BJ (cell line): ENCODE measurements at regions of chr5 and their contacts with region 1.

Region 1: DNA sequence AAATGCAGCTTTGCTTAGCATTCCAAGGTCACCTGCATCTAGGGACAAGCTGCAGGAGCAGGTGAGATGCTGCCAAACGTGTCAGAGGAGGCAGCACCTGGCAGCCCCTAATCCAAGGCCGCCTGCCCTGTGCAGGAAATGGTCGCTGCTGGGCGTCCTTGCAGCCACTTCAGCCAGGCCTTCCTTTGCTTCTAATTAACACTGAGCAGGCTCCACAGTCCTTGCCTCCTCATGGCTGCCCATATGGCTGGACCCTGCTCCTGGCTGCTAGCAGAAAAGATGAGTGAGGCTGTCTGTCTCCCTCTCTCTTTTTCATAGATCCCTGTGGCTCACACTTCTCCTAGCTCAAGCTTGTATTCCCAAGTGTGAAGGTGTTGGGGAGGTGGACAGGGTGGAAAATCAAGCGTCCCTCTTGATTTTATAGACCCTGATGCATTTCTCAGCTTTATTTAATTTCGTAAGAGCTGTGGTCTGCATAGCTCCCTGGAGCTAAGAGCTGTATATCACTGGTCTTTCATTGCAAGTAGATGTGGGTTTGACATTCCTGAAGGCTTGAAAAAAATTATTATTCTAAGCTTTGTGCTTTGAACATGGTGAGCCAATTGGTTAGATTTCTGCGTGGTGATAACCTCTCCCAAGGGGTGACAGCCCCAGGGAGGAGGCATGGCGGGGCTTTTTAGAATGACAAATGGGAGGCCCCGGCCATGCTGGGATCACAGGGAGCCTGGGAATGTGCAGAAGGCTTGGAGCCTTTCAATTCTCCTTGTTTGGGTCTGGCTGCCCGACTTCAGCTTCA is 193.8 kb downstream of the SLIT3 start:
- DNase-seq: no peak
- H3K4me3 ChIP-seq: no peak overlapping the region
- H3K27me3 ChIP-seq: no peaks in the 10 kb centered on the region; the same call in 1 of the 2 replicates
- CTCF ChIP-seq: no peak

Region 2: DNA sequence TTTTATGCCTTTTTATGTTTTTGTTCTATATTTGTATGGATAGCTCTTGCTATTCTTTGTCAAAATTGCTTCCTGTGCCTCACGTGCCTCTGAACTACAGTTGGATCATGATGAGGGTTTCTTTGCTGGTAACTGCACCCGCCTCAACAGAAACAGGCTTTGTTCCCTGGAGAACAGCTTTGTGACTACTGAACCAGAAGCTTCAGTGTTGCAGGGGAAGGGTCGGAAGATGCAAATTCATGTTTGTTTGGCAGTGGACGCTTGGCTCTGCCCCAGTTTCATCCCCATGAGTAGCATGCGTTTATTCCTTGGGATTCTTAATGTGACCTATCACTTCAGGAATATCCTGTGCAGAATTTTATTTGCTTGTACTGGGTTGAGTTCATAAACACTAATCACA is 1774.8 kb before region 1 on chr5:
- CTCF ChIA-PET with region 1: no interaction called
- POLR2A ChIA-PET with region 1: interaction called, 15 read pairs
- DNase-seq: no peak
- H3K4me3 ChIP-seq: no peak overlapping the region
- H3K27me3 ChIP-seq: no peaks in the 10 kb centered on the region
- CTCF ChIP-seq: no peak